ENCODE measurements at regions of chr6 and their contacts with region 1.

Region 1: GRCh38 chr6:107866606-107867301 is 42.6 kb upstream of the SCML4 start:
- DNase-seq: peak in 20 of 35 experiments; percentile 10 to 75 (median 20)
- ATAC-seq: peak; percentile 60 to 73 (median 67)
- H3K4me3 ChIP-seq: no peak overlapping the region
- H3K4me3 Mint-ChIP-seq: peak overlapping the region in 1 of 3 donors; percentile 31
- H3K27ac ChIP-seq: no peak overlapping the region
- H3K27ac Mint-ChIP-seq: no peak overlapping the region
- H3K4me1 ChIP-seq: peaks cover 0 to 4% of the 10 kb centered on the region in 2 experiments
- H3K4me1 Mint-ChIP-seq: peaks cover 0 to 7% (median 4%) of the 10 kb centered on the region in 3 donors
- H3K27me3 ChIP-seq: peaks cover 0 to 11% of the 10 kb centered on the region in 2 experiments
- H3K27me3 Mint-ChIP-seq: no peaks in the 10 kb centered on the region

Region 2: DNA sequence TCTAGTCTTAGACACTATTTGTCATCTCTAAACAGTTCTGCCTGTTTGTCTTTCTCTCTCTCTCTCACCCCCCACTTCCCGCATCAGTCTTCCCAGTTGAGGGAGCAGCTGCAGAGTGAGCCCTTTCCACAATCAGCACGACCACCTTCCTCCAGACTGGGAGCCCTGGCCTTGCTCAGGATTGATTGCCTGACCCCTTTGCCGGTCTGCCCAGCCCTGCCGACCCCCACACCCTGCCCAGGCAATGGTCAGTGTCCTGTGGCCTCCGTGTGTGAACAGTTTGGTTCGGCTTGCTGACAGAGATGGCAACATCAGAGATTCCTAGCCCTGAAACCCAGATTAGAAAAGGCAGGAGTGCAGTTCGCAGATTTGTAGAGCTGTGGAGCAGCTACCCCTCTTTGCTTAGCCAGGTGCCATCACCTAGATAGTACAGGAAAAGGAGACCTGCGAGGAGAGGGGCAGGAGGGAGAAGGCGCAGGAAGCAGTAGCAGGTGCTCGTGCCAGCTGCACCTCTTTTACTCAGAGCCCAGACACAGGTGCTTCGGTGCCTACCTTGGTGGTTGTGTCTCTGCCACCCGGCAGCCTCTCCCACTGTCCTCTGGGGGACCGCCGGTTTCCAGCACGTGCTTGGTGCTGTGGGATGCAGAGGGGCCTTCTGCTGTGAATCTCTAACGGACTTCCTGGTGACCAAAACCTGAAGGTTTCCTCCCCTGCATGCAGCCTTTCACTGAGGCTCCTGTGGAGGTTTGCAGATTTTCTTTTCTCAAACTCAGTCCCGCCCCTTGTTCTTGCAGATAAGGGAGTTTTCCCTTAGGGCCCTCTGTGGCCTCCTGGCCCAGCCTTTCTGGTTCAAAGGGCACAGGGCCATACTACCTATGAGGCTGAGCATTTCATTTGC is 135.1 kb before region 1 on chr6:
- CTCF ChIA-PET with region 1: interaction called, 10 read pairs
- POLR2A ChIA-PET with region 1: interaction called in 1 of 2 experiments, 3 read pairs
- DNase-seq: peak in 21 of 35 experiments; percentile 17 to 55 (median 36)
- ATAC-seq: peak; percentile 49 to 62 (median 60)
- H3K4me3 ChIP-seq: peak overlapping the region; percentile 71 to 79
- H3K4me3 Mint-ChIP-seq: peak overlapping the region; percentile 94 to 97 (median 94)
- H3K27ac ChIP-seq: peak overlapping the region; percentile 78
- H3K27ac Mint-ChIP-seq: peak overlapping the region; percentile 96 to 99
- H3K4me1 ChIP-seq: peaks cover 52 to 75% of the 10 kb centered on the region in 2 experiments
- H3K4me1 Mint-ChIP-seq: peaks cover 90 to 95% (median 94%) of the 10 kb centered on the region in 3 donors
- H3K27me3 ChIP-seq: no peaks in the 10 kb centered on the region
- H3K27me3 Mint-ChIP-seq: no peaks in the 10 kb centered on the region

Measured in T-cell (primary cell).